ENCODE measurements at regions of chr2 and their contacts with region 1.

Region 1: GRCh38 chr2:197011799-197012641 is 85.5 kb upstream of the PGAP1 start:
- DNase-seq: peak; percentile 77
- H3K4me3 ChIP-seq: no peak overlapping the region
- H3K27ac ChIP-seq: no peak overlapping the region
- H3K4me1 ChIP-seq: no peaks in the 10 kb centered on the region; a peak in 2 of 4 replicates
- H3K27me3 ChIP-seq: no peaks in the 10 kb centered on the region
- CTCF ChIP-seq: peak; percentile 93
- EP300 ChIP-seq: no peak
- RAD21 ChIP-seq: peak; percentile 88

Region 2: GRCh38 chr2:197024206-197024605 is 12.2 kb after region 1 on chr2:
- CTCF ChIA-PET with region 1: interaction called, 10 read pairs
- POLR2A ChIA-PET with region 1: no interaction called
- DNase-seq: no peak
- H3K4me3 ChIP-seq: no peak overlapping the region
- H3K27ac ChIP-seq: no peak overlapping the region
- H3K4me1 ChIP-seq: no peaks in the 10 kb centered on the region
- H3K27me3 ChIP-seq: no peaks in the 10 kb centered on the region
- CTCF ChIP-seq: no peak
- EP300 ChIP-seq: no peak
- RAD21 ChIP-seq: no peak

Region 3: GRCh38 chr2:197378494-197379307 is 366.7 kb after region 1 on chr2:
- CTCF ChIA-PET with region 1: interaction called, 19 read pairs
- POLR2A ChIA-PET with region 1: no interaction called
- DNase-seq: peak; percentile 81
- H3K4me3 ChIP-seq: no peak overlapping the region; a peak in 1 of 4 replicates
- H3K27ac ChIP-seq: peak overlapping the region; percentile 11 to 63; a peak in 2 of 4 replicates
- H3K4me1 ChIP-seq: peaks cover 6 to 8% of the 10 kb centered on the region in 2 experiments; a peak in 2 of 4 replicates
- H3K27me3 ChIP-seq: no peaks in the 10 kb centered on the region
- CTCF ChIP-seq: peak; percentile 91
- EP300 ChIP-seq: no peak
- RAD21 ChIP-seq: peak; percentile 99

Measured in SK-N-SH (cell line).